Naive thymus-derived CD4-positive, alpha-beta T cell (primary cell): ENCODE measurements at regions of chr2 and their contacts with region 1.

Region 1: GRCh38 chr2:215751200-215751910 is 262.0 kb downstream of the MREG start:
- DNase-seq: no peak
- ATAC-seq: no peak
- H3K4me3 ChIP-seq: no peak overlapping the region
- H3K4me3 Mint-ChIP-seq: peak overlapping the region in 6 of 10 donors; percentile 8 to 68 (median 58)
- H3K27ac ChIP-seq: no peak overlapping the region
- H3K27ac Mint-ChIP-seq: peak overlapping the region in 1 of 9 donors; percentile 65
- H3K4me1 ChIP-seq: peaks cover 0 to 14% of the 10 kb centered on the region in 2 donors
- H3K4me1 Mint-ChIP-seq: peaks cover 13 to 35% (median 32%) of the 10 kb centered on the region in 7 donors
- H3K27me3 ChIP-seq: no peaks in the 10 kb centered on the region
- H3K27me3 Mint-ChIP-seq: peaks cover 0 to 33% (median 13%) of the 10 kb centered on the region in 5 donors

Region 2: DNA sequence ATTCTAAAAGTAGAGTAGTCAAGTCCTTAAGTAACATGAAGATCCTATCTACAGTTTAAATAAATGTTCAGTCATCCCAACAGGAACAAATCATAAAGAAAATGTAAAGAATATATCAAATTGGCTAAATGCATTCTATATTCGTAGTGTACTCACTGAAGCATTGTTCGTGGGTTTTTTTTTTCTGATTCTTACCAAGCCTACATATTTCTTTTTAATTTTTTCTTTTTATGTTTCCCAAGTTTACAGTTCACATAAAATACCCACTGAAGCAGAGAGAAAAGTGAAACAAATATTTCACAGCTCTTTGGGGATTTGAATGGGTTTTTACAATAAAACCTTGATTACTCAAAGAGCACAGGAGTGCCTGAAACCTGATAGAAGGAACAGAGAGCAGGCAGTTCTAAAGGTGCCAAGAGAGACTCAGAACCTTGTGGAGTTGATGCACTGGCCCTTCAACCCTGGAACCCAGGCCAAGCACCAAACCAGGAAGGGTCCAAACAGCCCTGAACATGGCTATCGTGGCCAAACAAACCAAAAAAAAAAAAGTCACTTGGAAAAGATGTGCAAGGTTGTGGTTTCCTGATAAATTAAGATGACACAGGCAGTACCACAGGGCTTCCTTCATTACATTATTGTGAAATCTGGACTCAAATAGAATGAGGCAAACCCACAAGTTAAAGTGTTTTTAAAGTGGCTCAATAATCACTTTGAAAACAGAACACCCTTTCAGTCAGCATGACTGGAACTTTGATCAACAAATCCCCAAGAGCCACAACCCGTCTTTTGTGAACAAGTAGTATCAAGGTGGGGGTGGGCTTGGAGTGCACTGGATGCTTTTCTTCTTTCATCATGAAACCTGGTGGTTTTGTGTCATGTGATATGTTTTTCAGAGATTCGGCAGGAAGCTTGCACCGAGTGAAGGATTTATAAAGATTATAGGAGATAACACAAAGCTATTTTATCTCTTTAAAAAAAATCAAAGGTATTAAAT is 70.5 kb before region 1 on chr2:
- CTCF ChIA-PET with region 1: no interaction called
- POLR2A ChIA-PET with region 1: no interaction called
- intact Hi-C with region 1: loop called in 1 of 2 experiments (anchors 5 kb)
- DNase-seq: peak in 8 of 9 donors; percentile 23 to 89 (median 78)
- ATAC-seq: peak; percentile 90
- H3K4me3 ChIP-seq: no peak overlapping the region
- H3K4me3 Mint-ChIP-seq: peak overlapping the region; percentile 45 to 78 (median 65)
- H3K27ac ChIP-seq: no peak overlapping the region
- H3K27ac Mint-ChIP-seq: peak overlapping the region; percentile 50 to 87 (median 82)
- H3K4me1 ChIP-seq: peaks cover 6 to 16% of the 10 kb centered on the region in 2 donors
- H3K4me1 Mint-ChIP-seq: peaks cover 19 to 67% (median 54%) of the 10 kb centered on the region in 7 donors
- H3K27me3 ChIP-seq: no peaks in the 10 kb centered on the region
- H3K27me3 Mint-ChIP-seq: no peaks in the 10 kb centered on the region